CD14-positive monocyte (primary cell): ENCODE measurements at regions of chr5 and their contacts with region 1.

Region 1: DNA sequence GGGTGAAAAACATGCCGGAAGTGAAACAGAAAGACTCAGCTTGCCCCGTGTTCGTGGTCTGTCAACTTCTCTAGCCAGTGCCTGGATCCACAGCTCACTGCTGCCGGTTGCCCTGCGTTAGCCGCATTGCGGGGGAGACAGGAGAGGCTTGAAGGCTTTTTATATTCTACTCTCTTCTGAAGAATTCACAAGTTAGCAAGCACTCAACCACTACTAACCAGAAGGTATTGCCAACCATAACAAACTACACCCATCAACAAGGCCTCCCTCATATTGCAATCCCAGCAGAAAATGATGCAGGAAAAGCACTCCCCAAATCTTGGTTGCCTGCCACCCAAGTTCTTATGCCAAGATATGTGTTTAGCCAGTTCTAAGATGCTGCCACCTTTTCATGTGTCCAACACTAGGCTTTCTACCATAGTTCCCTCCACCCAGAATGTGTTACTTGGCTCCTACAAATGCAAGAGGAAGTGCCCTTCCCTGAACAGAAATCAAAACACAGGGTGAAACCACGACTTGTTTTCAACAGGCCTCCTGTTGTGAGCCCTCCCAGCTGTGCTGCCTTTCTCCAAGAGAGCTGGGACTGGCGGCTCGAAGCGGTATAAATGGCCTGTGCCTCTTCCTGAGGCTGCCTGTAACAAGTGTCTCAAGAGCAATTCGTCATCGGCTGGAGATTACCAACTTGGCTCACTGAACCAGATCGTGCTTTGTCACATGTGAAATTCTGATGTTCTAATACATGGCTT is 129.0 kb downstream of the SNX18 start:
- DNase-seq: peak; percentile 85 to 96 (median 86)
- H3K4me3 ChIP-seq: peak overlapping the region in 2 of 3 experiments; percentile 25 to 64
- H3K4me3 Mint-ChIP-seq: peak overlapping the region; percentile 71 to 87
- H3K27ac ChIP-seq: peak overlapping the region; percentile 87 to 97
- H3K27ac Mint-ChIP-seq: peak overlapping the region; percentile 96 to 99 (median 97)
- H3K4me1 ChIP-seq: peaks cover 44 to 46% of the 10 kb centered on the region in 2 donors
- H3K4me1 Mint-ChIP-seq: peaks cover 52% of the 10 kb centered on the region
- H3K27me3 ChIP-seq: no peaks in the 10 kb centered on the region
- H3K27me3 Mint-ChIP-seq: peaks cover 0 to 2% (median 0%) of the 10 kb centered on the region in 3 donors
- CTCF ChIP-seq: no peak

Region 2: GRCh38 chr5:54610197-54610944 is 36.2 kb before region 1 on chr5:
- intact Hi-C with region 1: loop called in 1 of 2 experiments (anchors 5 kb)
- DNase-seq: peak; percentile 76 to 84 (median 82)
- H3K4me3 ChIP-seq: peak overlapping the region in 1 of 3 experiments; percentile 42
- H3K4me3 Mint-ChIP-seq: peak overlapping the region; percentile 6 to 76
- H3K27ac ChIP-seq: peak overlapping the region; percentile 59 to 83
- H3K27ac Mint-ChIP-seq: peak overlapping the region; percentile 91 to 97 (median 94)
- H3K4me1 ChIP-seq: peaks cover 69 to 74% of the 10 kb centered on the region in 2 donors
- H3K4me1 Mint-ChIP-seq: peaks cover 72% of the 10 kb centered on the region
- H3K27me3 ChIP-seq: no peaks in the 10 kb centered on the region
- H3K27me3 Mint-ChIP-seq: no peaks in the 10 kb centered on the region
- CTCF ChIP-seq: no peak